ENCODE measurements at regions of chr22 and their contacts with region 1.

Region 1: DNA sequence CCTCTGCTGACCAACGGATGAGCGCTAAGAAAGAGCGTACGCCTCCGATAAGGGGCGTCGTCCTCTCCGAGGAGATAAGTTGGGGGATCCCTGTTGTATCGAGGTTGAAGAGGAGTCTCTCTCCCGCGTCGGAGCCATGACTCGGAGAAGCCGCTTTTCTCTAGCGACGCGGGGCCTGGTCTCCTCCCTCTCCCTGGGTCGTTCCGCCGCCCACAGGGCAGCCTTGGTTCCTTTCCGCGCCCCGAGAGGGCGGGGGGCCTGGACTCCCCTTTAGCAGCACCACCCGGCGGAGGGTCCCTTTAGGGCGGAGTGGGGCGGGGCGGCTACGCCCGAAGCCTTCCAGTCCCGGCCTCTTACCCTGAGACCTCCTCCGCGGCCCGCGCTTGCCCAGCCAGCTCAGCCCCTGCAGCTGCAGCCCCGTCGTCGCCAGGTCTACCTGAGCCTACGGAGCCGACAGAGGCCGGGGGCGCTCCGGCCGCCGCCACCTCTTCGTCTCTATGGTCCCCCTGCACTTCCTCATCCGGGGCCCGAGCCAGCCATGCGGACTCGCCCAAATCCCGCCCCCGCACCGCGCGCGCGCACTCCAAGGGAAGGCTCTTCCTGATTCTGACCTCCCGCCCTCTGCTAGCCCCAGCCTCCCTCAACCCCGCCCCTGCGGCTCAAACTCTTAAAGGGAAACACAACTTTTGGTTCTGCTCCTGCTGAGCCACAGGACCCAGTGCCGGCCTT is at the start of gene PRR14L:
- DNase-seq: peak; percentile 96 to 98
- H3K4me3 ChIP-seq: peak within 1 kb of the TSS; percentile 54
- H3K4me3 Mint-ChIP-seq: peak within 1 kb of the TSS; percentile 81
- H3K27ac Mint-ChIP-seq: peak within 1 kb of the TSS; percentile 87
- H3K4me1 ChIP-seq: peaks cover 35% of the 10 kb centered on the region
- H3K4me1 Mint-ChIP-seq: peaks cover 13% of the 10 kb centered on the region
- H3K27me3 ChIP-seq: no peaks in the 10 kb centered on the region
- H3K27me3 Mint-ChIP-seq: no peaks in the 10 kb centered on the region
- CTCF ChIP-seq: peak in 1 of 2 experiments; percentile 21
- total RNA-seq, gene PRR14L: 41.6 and 42.5 TPM in 2 replicates

Region 2: DNA sequence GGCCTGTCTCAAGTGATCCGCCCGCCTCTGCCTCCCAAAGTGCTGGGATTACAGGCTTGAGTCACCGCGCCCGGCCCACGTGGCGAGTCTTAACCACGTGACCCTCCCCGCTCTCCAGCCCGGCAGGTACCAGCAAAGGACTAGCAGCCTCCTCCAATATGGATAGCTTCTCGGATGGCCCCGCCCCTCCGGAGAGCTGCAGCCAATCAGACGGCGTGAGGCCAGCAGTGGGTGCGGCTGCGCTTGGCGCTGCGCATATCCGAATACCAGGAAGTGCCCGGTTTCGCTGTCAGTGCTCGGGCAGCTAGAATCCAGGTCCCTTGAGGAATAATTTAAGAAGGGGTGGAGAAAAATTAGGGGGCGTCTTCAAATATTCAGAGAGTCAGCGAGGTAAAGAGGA is 73.1 kb before region 1 on chr22:
- CTCF ChIA-PET with region 1: interaction called, 3 read pairs
- POLR2A ChIA-PET with region 1: no interaction called
- intact Hi-C with region 1: loop called (anchors 2 kb)
- DNase-seq: peak; percentile 98
- H3K4me3 ChIP-seq: peak overlapping the region; percentile 55
- H3K4me3 Mint-ChIP-seq: peak overlapping the region; percentile 90
- H3K27ac Mint-ChIP-seq: peak overlapping the region; percentile 89
- H3K4me1 ChIP-seq: peaks cover 5% of the 10 kb centered on the region; the same call in 1 of the 2 replicates
- H3K4me1 Mint-ChIP-seq: peaks cover 11% of the 10 kb centered on the region
- H3K27me3 ChIP-seq: no peaks in the 10 kb centered on the region
- H3K27me3 Mint-ChIP-seq: no peaks in the 10 kb centered on the region
- CTCF ChIP-seq: no peak

Region 3: DNA sequence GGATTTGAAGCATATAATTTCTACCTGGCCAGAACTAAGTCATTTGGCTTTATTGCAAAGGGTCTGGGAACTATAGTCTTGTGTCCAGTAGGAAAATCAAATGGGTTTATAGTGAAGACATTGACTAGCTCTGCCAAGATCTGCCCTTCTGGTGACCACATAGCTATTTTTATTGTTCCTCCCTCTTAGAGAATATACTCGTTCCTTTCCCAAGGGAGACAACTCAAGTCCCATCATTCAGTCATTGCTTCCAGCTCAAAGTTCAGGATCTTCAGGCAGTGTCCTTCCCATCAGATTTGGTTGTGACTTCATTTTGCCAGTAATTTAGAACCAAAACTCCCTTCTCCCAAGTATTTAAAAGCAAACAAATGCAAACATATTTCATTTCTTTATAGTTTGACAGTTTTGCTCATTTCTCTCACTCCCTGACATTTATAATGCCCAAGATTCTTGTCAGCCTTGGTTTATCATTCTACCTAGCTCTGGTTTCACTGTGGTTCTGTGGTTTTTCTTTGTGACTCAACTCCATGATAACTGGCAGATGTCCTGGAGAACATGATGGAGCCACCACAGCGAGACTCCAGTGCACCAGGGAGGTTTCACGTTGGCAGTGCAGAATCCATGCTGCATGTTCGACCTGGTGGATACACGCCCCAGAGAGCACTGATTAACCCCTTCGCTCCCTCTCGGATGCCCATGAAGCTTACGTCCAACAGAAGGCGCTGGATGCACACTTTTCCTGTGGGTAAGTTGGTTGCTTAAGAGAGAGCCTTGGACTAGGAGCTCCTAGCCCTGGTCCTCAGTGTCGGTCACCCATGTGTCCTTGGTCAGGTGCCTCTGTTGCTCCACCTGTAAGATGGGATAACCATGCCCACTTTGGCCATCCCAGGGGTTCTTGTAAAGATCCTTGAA is 68.9 kb after region 1 on chr22:
- CTCF ChIA-PET with region 1: no interaction called
- POLR2A ChIA-PET with region 1: no interaction called
- intact Hi-C with region 1: no loop called
- DNase-seq: no peak
- H3K4me3 ChIP-seq: no peak overlapping the region
- H3K4me3 Mint-ChIP-seq: no peak overlapping the region
- H3K27ac Mint-ChIP-seq: no peak overlapping the region
- H3K4me1 ChIP-seq: no peaks in the 10 kb centered on the region
- H3K4me1 Mint-ChIP-seq: no peaks in the 10 kb centered on the region
- H3K27me3 ChIP-seq: no peaks in the 10 kb centered on the region
- H3K27me3 Mint-ChIP-seq: no peaks in the 10 kb centered on the region
- CTCF ChIP-seq: no peak

Region 4: GRCh38 chr22:31846161-31847115 is 96.6 kb after region 1 on chr22:
- CTCF ChIA-PET with region 1: no interaction called
- POLR2A ChIA-PET with region 1: no interaction called
- intact Hi-C with region 1: no loop called
- DNase-seq: peak in 1 of 2 experiments; percentile 22
- H3K4me3 ChIP-seq: no peak overlapping the region
- H3K4me3 Mint-ChIP-seq: no peak overlapping the region
- H3K27ac Mint-ChIP-seq: no peak overlapping the region
- H3K4me1 ChIP-seq: no peaks in the 10 kb centered on the region
- H3K4me1 Mint-ChIP-seq: no peaks in the 10 kb centered on the region
- H3K27me3 ChIP-seq: no peaks in the 10 kb centered on the region
- H3K27me3 Mint-ChIP-seq: no peaks in the 10 kb centered on the region
- CTCF ChIP-seq: peak; percentile 26 to 44

Region 5: DNA sequence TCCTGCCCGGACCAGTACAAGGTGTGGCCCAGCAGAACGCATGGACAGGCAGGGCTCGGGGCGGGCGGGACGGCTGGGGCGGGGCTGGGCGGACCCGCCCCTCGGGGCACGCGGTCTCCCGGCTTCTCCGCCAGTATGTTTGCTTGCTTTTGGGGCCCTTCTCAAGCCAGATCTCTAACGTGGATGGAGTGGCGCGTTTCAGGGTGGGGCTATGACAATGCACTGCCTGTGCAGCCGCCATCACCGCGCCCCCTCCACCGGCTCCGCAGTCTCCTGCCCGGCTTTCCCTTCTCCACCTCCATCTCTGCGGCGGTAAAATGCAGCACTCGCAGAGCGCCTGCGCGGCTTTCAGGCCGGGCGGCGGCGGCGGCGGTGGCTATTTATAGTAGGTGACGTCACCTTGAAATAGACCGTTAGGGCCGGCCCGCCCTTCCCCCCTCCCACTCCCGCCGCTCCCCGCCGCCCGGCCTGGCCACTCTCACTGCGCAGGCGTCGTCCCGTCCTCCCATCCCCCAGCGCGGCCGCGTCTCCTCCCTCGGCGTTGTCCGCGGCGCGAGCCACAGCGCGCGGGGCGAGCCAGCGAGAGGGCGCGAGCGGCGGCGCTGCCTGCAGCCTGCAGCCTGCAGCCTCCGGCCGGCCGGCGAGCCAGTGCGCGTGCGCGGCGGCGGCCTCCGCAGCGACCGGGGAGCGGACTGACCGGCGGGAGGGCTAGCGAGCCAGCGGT is 194.3 kb after region 1 on chr22 and contains the start of gene YWHAH:
- CTCF ChIA-PET with region 1: no interaction called
- POLR2A ChIA-PET with region 1: no interaction called
- intact Hi-C with region 1: loop called (anchors 1 kb)
- DNase-seq: peak; percentile 94 to 96
- H3K4me3 ChIP-seq: peak within 1 kb of the TSS; percentile 88
- H3K4me3 Mint-ChIP-seq: no peak within 1 kb of the TSS
- H3K27ac Mint-ChIP-seq: peak within 1 kb of the TSS; percentile 88
- H3K4me1 ChIP-seq: peaks cover 9% of the 10 kb centered on the region; the same call in 1 of the 2 replicates
- H3K4me1 Mint-ChIP-seq: no peaks in the 10 kb centered on the region
- H3K27me3 ChIP-seq: no peaks in the 10 kb centered on the region
- H3K27me3 Mint-ChIP-seq: no peaks in the 10 kb centered on the region
- CTCF ChIP-seq: no peak
- total RNA-seq, gene YWHAH: 128 and 135 TPM in 2 replicates

Region 6: DNA sequence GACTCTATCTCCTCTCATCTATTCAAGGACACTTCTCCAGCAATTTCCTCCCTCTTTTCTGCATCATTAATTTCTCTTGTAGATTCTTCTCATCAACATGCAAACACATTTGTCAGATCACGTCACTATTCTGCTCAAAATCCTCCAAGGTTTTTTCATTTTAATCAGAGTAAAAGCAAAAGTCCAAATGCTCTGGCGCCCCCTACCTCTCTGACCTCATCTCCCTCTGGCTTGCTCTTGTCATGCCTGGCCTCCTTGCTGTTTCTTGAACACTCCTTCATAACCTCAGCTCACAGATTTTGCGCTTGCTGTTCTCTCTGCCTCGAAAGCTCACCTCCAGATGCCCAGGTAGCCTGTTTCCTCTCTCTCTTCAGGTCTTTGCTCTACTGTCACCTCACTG is 639.9 kb after region 1 on chr22:
- CTCF ChIA-PET with region 1: no interaction called
- POLR2A ChIA-PET with region 1: interaction called, 10 read pairs
- intact Hi-C with region 1: no loop called
- DNase-seq: peak in 1 of 2 experiments; percentile 33
- H3K4me3 ChIP-seq: no peak overlapping the region
- H3K4me3 Mint-ChIP-seq: no peak overlapping the region
- H3K27ac Mint-ChIP-seq: no peak overlapping the region
- H3K4me1 ChIP-seq: no peaks in the 10 kb centered on the region
- H3K4me1 Mint-ChIP-seq: no peaks in the 10 kb centered on the region
- H3K27me3 ChIP-seq: no peaks in the 10 kb centered on the region
- H3K27me3 Mint-ChIP-seq: no peaks in the 10 kb centered on the region
- CTCF ChIP-seq: peak; percentile 53 to 59